ENCODE measurements at regions of chr15 and their contacts with region 1.

Region 1: DNA sequence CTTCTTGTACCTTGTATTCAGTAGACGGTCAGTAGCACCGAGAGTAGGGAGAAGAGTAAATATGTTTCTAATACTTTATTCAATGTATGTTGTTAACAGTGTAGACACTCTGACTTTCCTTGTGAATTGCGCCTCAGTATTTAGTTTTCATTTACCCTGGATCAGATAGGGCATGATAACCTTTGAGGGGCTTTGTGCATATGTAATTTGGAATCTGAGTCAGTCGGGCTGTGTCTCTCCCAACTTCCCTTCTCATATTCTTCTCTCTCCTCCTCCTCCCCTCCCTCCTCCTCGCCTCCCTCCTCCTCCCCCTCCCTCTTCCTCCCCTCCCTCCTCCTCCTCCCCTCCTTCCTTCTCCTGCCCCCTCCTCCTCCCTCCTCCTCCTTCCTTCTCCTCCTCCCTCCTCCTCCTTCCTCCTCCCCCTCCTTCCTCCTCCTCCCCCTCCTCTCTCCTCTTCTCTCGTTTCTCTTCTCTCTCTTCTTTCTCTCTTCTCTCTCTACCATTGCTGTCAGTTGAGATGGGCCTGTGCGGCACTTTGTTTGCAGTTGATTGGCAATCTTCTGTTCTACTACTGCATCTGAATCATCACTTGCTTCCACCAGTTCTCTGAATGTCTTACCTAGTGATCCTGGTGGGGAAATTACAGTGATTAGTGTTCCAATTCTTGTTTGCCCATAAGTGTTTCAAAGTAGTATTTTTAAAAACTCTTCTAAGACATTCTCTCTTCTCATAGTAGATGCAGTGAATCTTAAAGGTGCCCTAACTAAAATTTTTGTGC is 162.3 kb downstream of the PGPEP1L start:
- DNase-seq: peak in 1 of 2 donors; percentile 28
- H3K4me3 ChIP-seq: no peak overlapping the region
- H3K27ac ChIP-seq: peak overlapping the region in 1 of 5 donors; percentile 23
- H3K4me1 ChIP-seq: peaks cover 14 to 61% (median 45%) of the 10 kb centered on the region in 4 donors
- H3K27me3 ChIP-seq: no peaks in the 10 kb centered on the region
- CTCF ChIP-seq: no peak
- EP300 ChIP-seq: no peak
- POLR2A ChIP-seq: no peak

Region 2: DNA sequence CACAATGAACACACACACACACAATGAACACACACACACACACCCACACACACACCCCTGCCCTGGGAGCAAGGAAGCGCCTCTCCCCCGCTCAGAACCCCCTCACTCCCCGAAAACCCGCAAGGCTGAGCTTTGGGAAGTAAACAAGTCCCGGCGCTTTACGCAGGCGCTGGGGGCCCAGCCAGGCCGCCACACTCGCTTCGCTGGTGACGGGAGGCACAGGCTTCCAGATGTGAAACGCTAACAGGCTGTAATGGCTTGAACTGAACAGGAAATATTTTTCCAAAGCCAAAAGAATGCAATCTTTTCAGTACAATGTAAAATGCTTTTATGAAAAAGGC is 319.7 kb before region 1 on chr15:
- intact Hi-C with region 1: loop called (anchors 10 kb)
- DNase-seq: peak in 1 of 2 donors; percentile 84
- H3K4me3 ChIP-seq: no peak overlapping the region
- H3K27ac ChIP-seq: peak overlapping the region in 1 of 5 donors; percentile 24
- H3K4me1 ChIP-seq: peaks cover 0 to 9% (median 0%) of the 10 kb centered on the region in 4 donors
- H3K27me3 ChIP-seq: no peaks in the 10 kb centered on the region
- CTCF ChIP-seq: no peak
- EP300 ChIP-seq: no peak
- POLR2A ChIP-seq: no peak

Region 3: DNA sequence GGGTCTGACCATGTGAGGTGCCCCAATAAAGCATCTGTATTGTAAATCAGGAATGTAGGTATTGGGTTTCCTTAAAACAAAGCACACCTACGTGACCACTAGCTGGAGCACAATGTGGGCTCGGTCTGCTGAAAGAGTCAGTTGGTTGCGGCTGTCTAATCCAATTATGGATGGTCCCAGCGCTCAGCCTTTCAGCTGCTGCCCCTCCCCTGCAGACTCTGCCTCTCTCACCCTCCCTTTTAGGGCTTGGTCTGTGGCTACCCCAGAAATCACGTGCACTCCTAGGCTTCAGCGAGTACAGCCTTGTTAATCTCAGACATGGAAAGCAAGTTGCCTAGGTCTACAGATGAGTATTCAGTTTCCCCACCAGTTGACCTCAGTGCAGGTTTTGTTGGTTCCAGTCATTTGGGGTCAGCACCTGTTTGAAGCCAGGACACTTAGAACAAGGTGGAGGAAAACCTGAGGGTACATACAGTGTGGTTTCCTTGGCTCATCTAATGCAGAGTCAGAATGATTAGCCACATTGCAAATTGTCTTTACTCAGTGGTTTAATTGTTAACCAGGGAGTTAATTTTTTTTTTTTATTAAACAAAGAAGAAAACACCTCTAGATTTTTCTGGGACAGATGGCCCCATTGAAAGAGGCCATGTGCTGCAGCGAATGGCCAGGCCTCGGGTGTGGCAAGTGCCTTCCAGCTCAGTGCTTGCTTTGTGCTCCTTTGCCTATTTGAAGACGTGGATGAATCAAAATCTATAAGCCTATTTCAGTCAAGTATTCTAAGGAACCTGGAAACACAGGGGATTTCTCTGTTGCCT is 59.3 kb before region 1 on chr15:
- intact Hi-C with region 1: no loop called
- DNase-seq: peak; percentile 63 to 73
- H3K4me3 ChIP-seq: no peak overlapping the region
- H3K27ac ChIP-seq: peak overlapping the region; percentile 51 to 78 (median 73)
- H3K4me1 ChIP-seq: peaks cover 33 to 75% (median 47%) of the 10 kb centered on the region in 4 donors
- H3K27me3 ChIP-seq: no peaks in the 10 kb centered on the region
- CTCF ChIP-seq: no peak
- EP300 ChIP-seq: no peak
- POLR2A ChIP-seq: no peak

Measured in stomach (tissue), 19 donors.